ENCODE measurements at regions of chr5 and their contacts with region 1.

Region 1: DNA sequence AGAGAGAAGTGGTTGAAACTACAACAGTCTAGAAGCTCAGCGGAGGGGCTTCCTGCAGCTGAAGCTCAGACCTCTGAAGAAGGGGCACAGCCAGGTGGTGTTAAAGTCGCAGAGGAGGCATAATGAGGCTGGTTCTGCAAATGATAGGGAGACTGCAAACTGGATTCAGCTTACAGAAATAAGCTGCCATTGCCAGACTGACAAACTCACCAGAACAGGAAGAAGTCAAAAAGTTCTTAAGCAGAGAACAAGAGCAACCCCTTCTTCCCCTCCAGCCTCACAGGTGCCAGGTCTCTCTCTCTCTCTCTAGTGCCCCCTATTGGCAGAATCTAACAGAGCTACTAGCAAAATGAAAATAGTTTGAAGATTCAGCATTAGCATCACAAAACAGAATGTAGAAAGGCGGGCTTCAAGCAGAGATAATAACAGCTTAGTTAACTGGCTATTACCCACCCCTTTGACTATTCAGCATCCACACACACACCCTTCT is 76.7 kb downstream of the GRAMD2B start:
- DNase-seq: peak; percentile 24
- ATAC-seq: peak; percentile 72
- H3K4me3 ChIP-seq: no peak overlapping the region
- H3K27ac ChIP-seq: no peak overlapping the region
- H3K4me1 ChIP-seq: no peaks in the 10 kb centered on the region
- H3K27me3 ChIP-seq: no peaks in the 10 kb centered on the region
- CTCF ChIP-seq: peak; percentile 35 to 77 (median 73); a peak in 5 of 6 replicates
- POLR2A ChIP-seq: no peak
- RAD21 ChIP-seq: peak; percentile 48

Region 2: GRCh38 chr5:126512451-126512850 is 12.6 kb after region 1 on chr5:
- CTCF ChIA-PET with region 1: interaction called, 12 read pairs
- POLR2A ChIA-PET with region 1: no interaction called
- RAD21 ChIA-PET with region 1: no interaction called
- intact Hi-C with region 1: no loop called
- DNase-seq: no peak
- ATAC-seq: no peak
- H3K4me3 ChIP-seq: no peak overlapping the region
- H3K27ac ChIP-seq: no peak overlapping the region
- H3K4me1 ChIP-seq: peaks cover 4 to 7% of the 10 kb centered on the region in 2 experiments; a peak in 3 of 4 replicates
- H3K27me3 ChIP-seq: no peaks in the 10 kb centered on the region
- CTCF ChIP-seq: no peak
- POLR2A ChIP-seq: no peak
- RAD21 ChIP-seq: no peak

Measured in HCT116 (cell line).